ENCODE measurements at regions of chr15 and their contacts with region 1.

Region 1: DNA sequence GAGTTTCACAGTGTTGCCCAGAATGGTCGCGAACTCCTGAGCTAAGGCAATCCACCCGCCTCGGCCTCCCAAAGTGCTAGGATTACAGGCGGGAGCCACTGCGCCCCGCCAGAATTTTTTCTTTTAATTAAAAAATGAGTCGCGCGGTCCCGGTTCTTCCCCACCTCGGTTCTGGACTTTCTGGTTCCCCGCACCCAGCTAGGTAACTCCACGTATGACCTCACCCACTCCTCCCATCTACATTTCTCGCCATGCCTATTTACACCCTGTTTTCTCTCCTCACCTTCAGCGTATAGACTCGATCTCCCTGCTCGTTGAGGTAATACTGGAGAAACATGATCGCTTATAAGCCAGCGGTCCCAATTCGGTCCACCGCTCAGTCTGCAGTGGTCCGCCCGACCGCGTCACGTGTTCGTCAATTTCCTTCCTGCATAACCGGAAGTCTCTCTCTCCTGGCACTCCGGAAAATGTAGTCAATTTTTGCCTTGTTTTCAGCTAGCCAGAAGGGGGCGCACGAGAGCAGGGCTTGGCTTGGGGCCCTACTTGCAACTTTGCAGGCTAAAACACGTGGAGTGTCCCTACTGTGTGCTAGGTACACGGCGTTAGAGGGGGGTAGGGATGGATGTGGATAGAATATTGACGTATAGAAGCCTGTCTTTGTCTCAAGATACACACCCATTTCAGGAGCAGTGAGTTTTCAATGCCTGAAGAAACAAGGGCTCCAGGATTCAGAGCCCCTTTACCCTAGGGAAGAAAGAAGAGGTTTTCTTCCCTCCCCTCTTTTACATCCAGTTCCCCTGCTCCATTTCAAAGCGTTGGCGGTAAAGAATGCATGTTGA is at the starts of genes NOP10 and NUTM1:
- DNase-seq: peak; percentile 57
- H3K4me3 ChIP-seq: peak within 1 kb of the TSS; percentile 76
- H3K27me3 ChIP-seq: no peaks in the 10 kb centered on the region; the same call in 1 of the 2 replicates
- CTCF ChIP-seq: peak; percentile 98
- polyA plus RNA-seq, gene NOP10: 345 and 352 TPM in 2 replicates
- polyA plus RNA-seq, gene NUTM1: not detected in 2 replicates

Region 2: GRCh38 chr15:34101366-34102175 is 241.4 kb before region 1 on chr15 and contains the starts of genes EMC7 and PGBD4:
- CTCF ChIA-PET with region 1: no interaction called
- POLR2A ChIA-PET with region 1: no interaction called
- DNase-seq: peak; percentile 96
- H3K4me3 ChIP-seq: peak within 1 kb of the TSS; percentile 88
- H3K27me3 ChIP-seq: no peaks in the 10 kb centered on the region
- CTCF ChIP-seq: no peak
- polyA plus RNA-seq, gene EMC7: 80.8 and 126 TPM in 2 replicates
- polyA plus RNA-seq, gene PGBD4: 0.77 and 1.3 TPM in 2 replicates

Region 3: DNA sequence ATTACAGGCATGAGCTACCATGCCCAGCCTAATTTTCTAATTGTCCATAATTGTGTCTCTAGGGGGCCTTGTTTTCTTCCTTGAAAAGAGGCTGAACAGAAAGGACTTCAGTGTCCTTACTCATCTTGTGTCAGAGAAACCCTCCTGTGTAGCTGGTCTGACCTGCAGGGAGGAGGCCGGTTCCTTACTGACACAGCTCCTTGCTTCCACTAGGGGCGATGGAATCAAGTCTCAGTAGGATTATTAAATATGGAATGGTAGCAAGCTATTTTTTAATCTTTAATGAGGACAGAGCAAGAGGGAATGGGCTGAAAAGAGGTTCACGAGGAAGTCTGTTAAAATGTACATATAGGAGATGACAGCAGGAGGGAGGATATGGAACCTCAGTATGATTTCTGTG is 15.4 kb after region 1 on chr15:
- CTCF ChIA-PET with region 1: interaction called, 15 read pairs
- POLR2A ChIA-PET with region 1: no interaction called
- DNase-seq: no peak
- H3K4me3 ChIP-seq: no peak overlapping the region
- H3K27me3 ChIP-seq: no peaks in the 10 kb centered on the region
- CTCF ChIP-seq: peak; percentile 13; the same call in 1 of the 2 replicates

Region 4: DNA sequence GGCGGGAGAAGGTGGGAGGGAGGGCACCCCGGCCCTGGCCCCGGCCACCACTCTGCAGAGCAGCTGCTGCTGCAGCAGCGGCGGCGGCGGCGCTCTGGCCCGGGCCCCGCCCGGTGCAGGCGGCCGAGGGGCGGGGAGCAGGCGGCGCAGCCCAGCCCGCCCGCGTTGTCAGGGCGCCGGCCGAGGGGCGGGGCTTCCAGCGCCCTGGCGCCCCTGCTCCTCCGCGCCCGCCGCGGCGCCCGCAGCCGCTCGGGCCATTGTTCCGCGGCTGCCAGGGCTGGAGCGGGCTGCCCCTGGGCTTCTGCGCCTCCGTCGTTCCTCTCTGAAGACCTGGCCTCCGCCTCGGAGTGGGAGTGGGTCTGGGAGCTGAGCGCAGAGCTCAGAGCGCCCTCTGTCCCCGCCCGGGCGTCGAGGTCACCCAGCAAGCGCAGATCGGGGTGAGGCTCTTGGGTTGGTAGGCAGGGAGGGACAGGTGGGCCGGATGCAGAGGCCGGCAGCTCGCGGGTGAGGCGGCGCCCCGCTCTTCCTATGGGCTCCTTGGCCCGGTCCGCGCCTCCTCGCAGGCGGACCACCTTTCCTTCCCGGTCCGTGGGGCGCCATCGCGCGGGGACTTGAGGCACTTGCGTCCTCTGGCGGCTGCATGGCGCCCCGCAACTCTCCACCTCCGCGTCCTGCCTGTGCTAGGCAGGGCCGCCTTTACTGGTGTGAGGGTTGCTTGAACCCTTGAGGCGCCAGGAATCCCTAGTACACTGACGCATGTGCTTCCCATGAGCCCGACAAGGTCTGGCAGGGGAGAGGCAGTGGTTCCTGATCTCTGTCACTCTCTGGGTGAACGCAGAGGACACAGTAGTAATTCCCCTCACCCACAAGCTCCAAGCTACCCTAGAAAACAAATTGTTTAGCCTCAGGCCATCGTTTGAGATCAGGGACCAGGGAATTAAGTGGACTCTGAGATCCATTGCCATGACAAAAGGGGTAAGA is 24.4 kb after region 1 on chr15 and contains the start of gene LPCAT4:
- CTCF ChIA-PET with region 1: interaction called, 27 read pairs
- POLR2A ChIA-PET with region 1: no interaction called
- DNase-seq: peak; percentile 26
- H3K4me3 ChIP-seq: peak within 1 kb of the TSS; percentile 91
- H3K27me3 ChIP-seq: no peaks in the 10 kb centered on the region
- CTCF ChIP-seq: peak; percentile 96
- polyA plus RNA-seq, gene LPCAT4: 29.5 and 45.3 TPM in 2 replicates

Region 5: DNA sequence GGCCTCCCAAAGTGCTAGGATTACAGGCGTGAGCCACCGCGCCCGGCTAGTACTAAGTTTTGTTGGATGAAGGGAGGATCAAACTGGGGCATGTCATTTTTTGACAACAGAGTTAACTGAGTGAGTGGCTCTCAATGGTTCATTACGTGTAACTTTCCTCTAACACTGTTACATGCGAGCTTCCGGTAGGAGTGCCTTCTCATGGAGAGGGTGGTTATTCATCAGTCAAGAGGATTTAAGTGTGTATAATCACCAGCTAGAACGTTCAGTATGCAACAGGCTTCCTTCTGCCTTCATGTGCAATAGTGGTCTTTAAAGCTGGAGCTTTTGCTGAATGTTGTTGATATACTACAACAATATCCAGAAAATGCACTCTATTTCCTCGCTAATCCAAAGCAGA is 113.7 kb after region 1 on chr15:
- CTCF ChIA-PET with region 1: no interaction called
- POLR2A ChIA-PET with region 1: no interaction called
- DNase-seq: no peak
- H3K4me3 ChIP-seq: no peak overlapping the region
- H3K27me3 ChIP-seq: no peaks in the 10 kb centered on the region; the same call in 1 of the 2 replicates
- CTCF ChIP-seq: no peak

Measured in BJ (cell line).